ENCODE measurements at regions of chr6 and their contacts with region 1.

Region 1: GRCh38 chr6:21263531-21264287 is 329.8 kb upstream of the SOX4 start:
- DNase-seq: peak; percentile 34
- H3K4me3 Mint-ChIP-seq: no peak overlapping the region
- H3K27ac Mint-ChIP-seq: no peak overlapping the region
- H3K4me1 Mint-ChIP-seq: peaks cover 22% of the 10 kb centered on the region
- H3K27me3 Mint-ChIP-seq: peaks cover 5% of the 10 kb centered on the region

Region 2: GRCh38 chr6:21281366-21281765 is 17.7 kb after region 1 on chr6:
- CTCF ChIA-PET with region 1: no interaction called
- POLR2A ChIA-PET with region 1: no interaction called
- intact Hi-C with region 1: no loop called
- DNase-seq: no peak
- H3K4me3 Mint-ChIP-seq: no peak overlapping the region
- H3K27ac Mint-ChIP-seq: no peak overlapping the region
- H3K4me1 Mint-ChIP-seq: no peaks in the 10 kb centered on the region
- H3K27me3 Mint-ChIP-seq: peaks cover 3% of the 10 kb centered on the region

Region 3: GRCh38 chr6:21402368-21402767 is 138.7 kb after region 1 on chr6:
- CTCF ChIA-PET with region 1: no interaction called
- POLR2A ChIA-PET with region 1: no interaction called
- intact Hi-C with region 1: loop called (anchors 1 kb)
- DNase-seq: peak; percentile 72
- H3K4me3 Mint-ChIP-seq: no peak overlapping the region
- H3K27ac Mint-ChIP-seq: no peak overlapping the region
- H3K4me1 Mint-ChIP-seq: peaks cover 11% of the 10 kb centered on the region
- H3K27me3 Mint-ChIP-seq: peaks cover 17% of the 10 kb centered on the region

Region 4: GRCh38 chr6:21426832-21427490 is 163.3 kb after region 1 on chr6:
- CTCF ChIA-PET with region 1: no interaction called
- POLR2A ChIA-PET with region 1: no interaction called
- intact Hi-C with region 1: no loop called
- DNase-seq: no peak
- H3K4me3 Mint-ChIP-seq: no peak overlapping the region
- H3K27ac Mint-ChIP-seq: no peak overlapping the region
- H3K4me1 Mint-ChIP-seq: no peaks in the 10 kb centered on the region
- H3K27me3 Mint-ChIP-seq: peaks cover 7% of the 10 kb centered on the region

Measured in activated CD4-positive, alpha-beta memory T cell treated with anti-CD3 and anti-CD28 coated beads for 36 hours (primary cell).